Heart right ventricle (tissue), 16 donors: ENCODE measurements at regions of chr7 and their contacts with region 1.

Region 1: DNA sequence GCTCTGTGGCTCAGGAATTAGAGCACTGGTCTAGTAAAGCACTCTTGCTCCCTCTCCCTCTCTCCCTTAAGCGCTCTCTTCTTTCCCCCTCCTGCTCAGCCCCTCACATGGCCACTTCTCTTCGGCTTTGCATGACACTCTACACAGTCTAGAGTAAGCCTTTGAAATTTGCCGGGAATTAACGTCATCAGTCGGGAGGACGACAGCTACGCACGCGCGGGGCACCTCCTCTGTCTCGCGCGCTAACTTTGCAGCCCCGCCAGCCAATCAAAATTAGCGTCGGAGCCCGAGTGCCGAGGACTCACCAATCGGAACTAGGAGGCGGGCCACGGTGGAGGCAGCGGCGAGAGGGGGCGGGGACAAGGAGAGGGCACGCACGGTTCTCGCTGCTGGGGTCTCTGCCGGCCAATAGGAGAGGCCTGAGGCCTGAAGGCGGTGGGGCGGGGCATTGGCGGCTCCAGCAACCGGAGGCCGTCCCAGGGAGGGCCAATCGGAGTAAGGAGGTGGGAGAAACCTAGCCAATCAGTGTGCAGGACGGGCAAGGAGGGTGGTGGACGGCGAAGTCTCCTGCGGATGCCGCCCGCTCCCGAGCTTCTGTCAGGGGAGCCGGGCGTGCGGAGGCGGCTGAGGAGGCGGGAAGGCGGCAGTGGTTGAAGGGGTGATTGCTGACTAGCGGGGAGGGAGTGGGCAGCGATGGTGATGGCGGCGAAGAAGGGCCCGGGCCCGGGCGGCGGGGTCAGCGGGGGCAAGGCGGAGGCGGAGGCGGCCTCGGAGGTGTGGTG is at the start of gene AGFG2:
- DNase-seq: peak; percentile 100
- ATAC-seq: peak; percentile 99 to 100 (median 100)
- H3K4me3 ChIP-seq: peak within 1 kb of the TSS; percentile 64 to 94 (median 84)
- H3K27ac ChIP-seq: peak within 1 kb of the TSS in 9 of 10 donors; percentile 59 to 84 (median 75)
- H3K4me1 ChIP-seq: peaks cover 6 to 27% (median 16%) of the 10 kb centered on the region in 9 donors
- H3K27me3 ChIP-seq: no peaks in the 10 kb centered on the region
- CTCF ChIP-seq: no peak
- total RNA-seq, gene AGFG2: 20.7 to 35.8 (median 28.4) TPM

Region 2: DNA sequence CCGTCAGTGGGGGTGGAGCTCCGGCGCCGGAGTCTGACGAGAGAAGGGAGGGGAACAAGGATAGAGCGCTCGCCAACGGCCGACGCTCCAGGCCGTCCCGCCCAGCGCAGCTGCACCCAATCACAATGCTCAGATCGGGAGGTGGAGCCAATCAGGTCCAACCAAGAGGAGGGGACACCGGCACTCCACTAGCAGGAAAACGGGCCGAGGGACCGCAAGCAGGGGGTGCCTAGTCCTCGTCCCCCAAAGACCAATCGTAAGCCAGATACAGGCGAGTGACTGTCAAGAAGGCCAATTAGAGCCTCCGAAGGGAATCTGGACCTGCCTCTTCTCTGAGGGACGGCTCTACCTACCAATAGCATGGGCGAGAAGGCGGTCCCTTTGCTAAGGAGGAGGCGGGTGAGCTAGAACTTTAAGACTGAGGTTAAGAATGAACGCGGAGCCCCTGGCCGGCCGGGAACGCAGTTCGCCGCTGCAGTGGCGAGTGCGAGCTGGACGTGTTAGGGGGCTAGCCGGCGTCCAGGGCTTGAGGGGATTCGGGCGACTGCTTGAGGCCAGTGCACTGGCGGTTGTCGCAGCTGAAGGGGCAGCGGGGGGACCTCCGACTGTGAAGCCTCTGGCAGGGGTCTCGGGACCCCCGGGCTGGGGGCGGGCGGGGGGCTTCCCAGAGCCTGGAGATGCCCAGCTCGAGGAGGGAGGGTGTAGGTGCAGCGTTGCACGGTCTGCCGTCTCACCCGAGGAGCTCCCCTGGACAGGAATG is 47.6 kb after region 1 on chr7 and contains the start of gene FBXO24:
- intact Hi-C with region 1: loop called in 1 of 10 experiments (anchors 2 kb)
- DNase-seq: peak; percentile 100
- ATAC-seq: peak; percentile 91 to 97 (median 94)
- H3K4me3 ChIP-seq: peak within 1 kb of the TSS; percentile 80 to 100 (median 96)
- H3K27ac ChIP-seq: peak within 1 kb of the TSS; percentile 90 to 98 (median 94)
- H3K4me1 ChIP-seq: peaks cover 9 to 67% (median 52%) of the 10 kb centered on the region in 9 donors
- H3K27me3 ChIP-seq: peaks cover 0 to 14% (median 0%) of the 10 kb centered on the region in 7 donors
- CTCF ChIP-seq: peak in 1 of 9 donors; percentile 10
- total RNA-seq, gene FBXO24: 0.15 to 0.66 (median 0.40) TPM in 8 of 10 donors, not detected in the others

Region 3: GRCh38 chr7:100682228-100682741 is 143.4 kb after region 1 on chr7:
- intact Hi-C with region 1: no loop called
- DNase-seq: no peak
- ATAC-seq: no peak
- H3K4me3 ChIP-seq: no peak overlapping the region
- H3K27ac ChIP-seq: no peak overlapping the region
- H3K4me1 ChIP-seq: peaks cover 0 to 30% (median 8%) of the 10 kb centered on the region in 9 donors
- H3K27me3 ChIP-seq: no peaks in the 10 kb centered on the region
- CTCF ChIP-seq: no peak

Region 4: GRCh38 chr7:100983451-100984187 is 444.8 kb after region 1 on chr7:
- intact Hi-C with region 1: no loop called
- DNase-seq: no peak
- ATAC-seq: no peak
- H3K4me3 ChIP-seq: no peak overlapping the region
- H3K27ac ChIP-seq: no peak overlapping the region
- H3K4me1 ChIP-seq: no peaks in the 10 kb centered on the region
- H3K27me3 ChIP-seq: peaks cover 0 to 5% (median 0%) of the 10 kb centered on the region in 7 donors
- CTCF ChIP-seq: no peak